Sciatic nerve (tissue), 2 donors: ENCODE measurements at regions of chr16 and their contacts with region 1.

Region 1: GRCh38 chr16:3059000-3059722 is 6.3 kb upstream of the IL32 start:
- DNase-seq: peak; percentile 91
- ATAC-seq: peak; percentile 92

Region 2: DNA sequence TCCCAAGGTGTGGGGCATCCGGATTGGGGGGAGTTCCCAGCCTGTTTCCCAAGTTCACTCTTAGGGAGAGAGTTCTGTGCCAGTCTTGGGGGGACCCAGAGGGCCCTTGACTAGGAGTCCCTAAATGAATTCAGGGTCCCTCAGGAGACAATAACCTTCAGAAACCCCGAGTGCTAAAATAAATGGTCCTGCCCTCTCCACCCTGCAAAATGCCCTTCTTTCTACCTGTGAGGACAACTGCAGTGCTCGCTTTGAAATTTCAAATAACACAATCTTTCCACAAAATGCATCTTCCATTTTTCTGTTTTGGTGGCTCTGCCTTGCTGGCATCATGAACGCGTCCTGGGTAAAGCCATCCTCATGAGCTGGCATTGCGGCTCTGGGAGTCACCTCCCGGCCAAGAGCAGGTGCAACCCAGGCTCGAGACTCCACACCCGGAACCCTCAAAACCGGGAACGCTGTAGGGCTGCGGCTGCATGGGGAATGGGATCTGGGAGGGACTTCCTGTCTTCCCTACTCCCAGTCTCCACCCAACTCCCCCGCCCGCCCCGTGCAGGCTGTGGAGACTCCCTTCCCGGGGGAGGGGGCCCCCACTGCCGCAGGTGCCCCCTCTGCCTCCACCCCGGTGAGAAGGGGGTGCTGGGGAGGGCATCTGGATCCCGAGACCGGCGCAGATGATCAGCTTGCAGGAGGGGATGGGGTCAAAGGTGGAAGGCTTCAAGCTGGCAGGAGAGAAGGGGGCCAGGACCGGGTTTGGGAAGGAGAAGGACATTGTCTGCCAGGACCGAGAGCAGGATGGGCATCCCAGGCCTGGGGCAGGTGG is 53.1 kb after region 1 on chr16 and contains the start of gene ZNF205:
- intact Hi-C with region 1: loop called (anchors 10 kb)
- DNase-seq: peak; percentile 83
- ATAC-seq: peak; percentile 91
- total RNA-seq, gene ZNF205: 12.3 TPM

Region 3: GRCh38 chr16:3161136-3162018 is 102.2 kb after region 1 on chr16:
- intact Hi-C with region 1: loop called (anchors 10 kb)
- DNase-seq: peak; percentile 54
- ATAC-seq: no peak

Region 4: GRCh38 chr16:3999479-4000325 is 940.5 kb after region 1 on chr16:
- intact Hi-C with region 1: no loop called
- DNase-seq: no peak
- ATAC-seq: peak; percentile 86